ENCODE measurements at regions of chr9 and their contacts with region 1.

Region 1: DNA sequence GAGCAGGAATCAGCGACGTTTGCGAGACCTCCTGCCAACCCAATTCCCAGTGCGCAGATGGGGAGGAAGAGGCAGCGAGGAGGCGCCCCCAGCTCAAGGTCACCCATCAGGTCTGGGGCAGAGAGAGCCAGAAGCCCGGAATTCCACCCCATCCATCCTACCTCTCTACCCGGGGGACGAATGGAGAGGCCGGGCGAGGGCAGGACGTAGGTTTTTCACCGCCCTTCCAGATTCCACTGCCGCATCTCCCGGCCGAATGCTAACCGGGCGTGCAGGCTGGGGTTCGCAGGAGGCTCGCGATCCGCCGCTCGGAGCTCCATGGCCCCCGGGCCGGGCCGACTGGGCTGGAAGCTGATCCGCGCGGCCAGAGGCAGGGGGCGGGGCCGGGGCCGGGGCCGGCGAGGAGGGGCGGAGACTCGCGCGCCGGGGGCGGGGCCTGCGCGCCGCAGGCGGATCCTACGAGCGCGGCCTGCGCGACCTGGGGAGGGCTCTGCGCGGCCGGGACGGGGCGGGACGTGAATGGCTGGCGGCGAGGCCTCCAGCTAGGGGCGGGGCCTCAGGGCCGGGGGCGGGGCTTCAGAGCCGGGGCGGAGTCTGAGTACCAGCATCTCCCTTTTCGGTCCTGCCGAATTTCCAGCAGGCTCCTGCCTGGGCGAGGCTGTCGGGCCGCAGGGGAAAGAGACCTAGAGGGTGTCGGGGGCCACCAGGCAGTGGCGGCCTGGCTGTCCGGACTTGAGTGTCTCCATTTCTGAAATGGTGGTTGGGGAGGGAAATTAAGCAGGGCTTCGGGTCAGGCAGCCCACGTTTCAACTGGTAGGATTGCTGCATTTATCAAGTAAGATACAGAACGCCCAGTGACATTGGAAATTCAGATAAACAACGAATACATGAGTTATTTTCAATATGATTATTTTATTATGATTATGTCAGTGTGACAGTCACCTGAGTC is at the start of gene ST6GALNAC4:
- DNase-seq: no peak
- H3K4me3 ChIP-seq: peak within 1 kb of the TSS; percentile 81 to 84
- H3K27ac ChIP-seq: peak within 1 kb of the TSS; percentile 74
- H3K4me1 ChIP-seq: peaks cover 63% of the 10 kb centered on the region
- H3K27me3 ChIP-seq: no peaks in the 10 kb centered on the region
- CTCF ChIP-seq: no peak
- POLR2A ChIP-seq: peak in 1 of 2 donors; percentile 35
- total RNA-seq, gene ST6GALNAC4: 33.1 TPM

Region 2: DNA sequence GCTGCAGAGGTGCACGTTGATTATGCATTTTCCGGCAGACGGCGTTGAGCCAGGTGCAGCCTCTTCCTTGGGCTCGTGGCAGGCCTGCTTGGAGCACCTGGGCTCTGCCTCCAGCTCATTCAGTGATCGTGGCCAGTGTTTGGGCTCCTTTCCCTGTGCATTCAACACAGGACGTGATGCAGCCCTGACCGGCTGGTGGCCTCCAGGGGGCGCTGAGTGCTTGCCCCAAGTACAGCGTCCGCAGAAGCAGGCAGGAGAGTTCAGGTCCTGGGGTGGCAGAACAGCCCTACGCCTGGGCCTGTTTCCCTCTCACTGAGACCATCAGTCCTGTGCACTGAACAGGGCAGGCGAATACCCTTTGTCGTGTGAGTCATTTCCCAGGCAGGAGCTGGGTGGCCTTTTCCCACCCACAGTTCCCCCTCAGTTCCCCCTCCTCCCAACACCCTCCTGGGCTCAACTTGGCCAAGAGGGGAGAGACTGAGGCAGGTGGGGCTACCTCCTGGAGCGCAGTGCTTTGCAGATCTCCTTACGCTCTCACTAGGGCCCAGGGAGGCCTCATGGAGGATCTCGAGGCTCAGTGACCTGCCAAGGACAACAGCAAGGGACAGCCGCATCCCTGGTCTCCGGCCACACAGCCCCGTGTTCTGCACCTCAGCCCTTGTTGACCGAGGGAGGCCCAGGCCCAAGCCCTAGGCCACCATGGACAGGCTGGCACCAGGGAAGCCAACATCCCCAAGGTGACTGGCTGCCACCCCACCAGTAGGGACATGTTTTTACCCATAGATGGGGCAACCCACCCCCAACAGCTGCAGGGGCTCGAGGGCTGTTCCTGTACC is 412.8 kb before region 1 on chr9:
- intact Hi-C with region 1: loop called (anchors 10 kb)
- DNase-seq: no peak
- H3K4me3 ChIP-seq: no peak overlapping the region
- H3K27ac ChIP-seq: peak overlapping the region; percentile 37
- H3K4me1 ChIP-seq: no peaks in the 10 kb centered on the region
- H3K27me3 ChIP-seq: no peaks in the 10 kb centered on the region
- CTCF ChIP-seq: peak; percentile 87 to 94 (median 91)
- POLR2A ChIP-seq: no peak

Region 3: DNA sequence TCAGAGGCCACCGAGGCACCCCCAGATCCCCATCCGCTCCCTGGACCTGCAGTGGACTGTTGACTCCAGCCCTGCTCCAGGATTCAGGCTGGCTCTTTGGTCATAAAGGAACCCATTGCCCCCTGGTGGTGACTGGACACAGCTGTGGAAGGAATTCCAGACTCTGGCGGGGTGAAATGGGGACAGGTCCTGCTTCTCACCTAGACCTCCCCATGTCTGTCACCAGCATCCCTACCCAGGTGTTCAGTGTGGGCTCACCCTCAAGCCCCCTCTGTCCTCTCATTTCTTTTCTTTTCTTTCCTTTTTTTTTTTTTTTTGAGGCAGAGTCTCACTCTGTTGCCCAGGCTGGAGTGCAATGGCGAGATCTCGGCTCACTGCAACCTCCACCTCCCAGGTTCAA is 330.4 kb before region 1 on chr9:
- intact Hi-C with region 1: loop called (anchors 5 kb)
- DNase-seq: no peak
- H3K4me3 ChIP-seq: no peak overlapping the region
- H3K27ac ChIP-seq: no peak overlapping the region
- H3K4me1 ChIP-seq: peaks cover 9% of the 10 kb centered on the region
- H3K27me3 ChIP-seq: no peaks in the 10 kb centered on the region
- CTCF ChIP-seq: peak; percentile 81 to 91 (median 88)
- POLR2A ChIP-seq: no peak

Region 4: GRCh38 chr9:127785023-127785932 is 131.7 kb before region 1 on chr9:
- intact Hi-C with region 1: loop called (anchors 5 kb)
- DNase-seq: no peak
- H3K4me3 ChIP-seq: peak overlapping the region; percentile 53 to 99
- H3K27ac ChIP-seq: peak overlapping the region; percentile 91
- H3K4me1 ChIP-seq: peaks cover 47% of the 10 kb centered on the region
- H3K27me3 ChIP-seq: no peaks in the 10 kb centered on the region
- CTCF ChIP-seq: peak; percentile 89 to 99 (median 93)
- POLR2A ChIP-seq: no peak